HepG2 (cell line): ENCODE measurements at regions of chr3 and their contacts with region 1.

Region 1: DNA sequence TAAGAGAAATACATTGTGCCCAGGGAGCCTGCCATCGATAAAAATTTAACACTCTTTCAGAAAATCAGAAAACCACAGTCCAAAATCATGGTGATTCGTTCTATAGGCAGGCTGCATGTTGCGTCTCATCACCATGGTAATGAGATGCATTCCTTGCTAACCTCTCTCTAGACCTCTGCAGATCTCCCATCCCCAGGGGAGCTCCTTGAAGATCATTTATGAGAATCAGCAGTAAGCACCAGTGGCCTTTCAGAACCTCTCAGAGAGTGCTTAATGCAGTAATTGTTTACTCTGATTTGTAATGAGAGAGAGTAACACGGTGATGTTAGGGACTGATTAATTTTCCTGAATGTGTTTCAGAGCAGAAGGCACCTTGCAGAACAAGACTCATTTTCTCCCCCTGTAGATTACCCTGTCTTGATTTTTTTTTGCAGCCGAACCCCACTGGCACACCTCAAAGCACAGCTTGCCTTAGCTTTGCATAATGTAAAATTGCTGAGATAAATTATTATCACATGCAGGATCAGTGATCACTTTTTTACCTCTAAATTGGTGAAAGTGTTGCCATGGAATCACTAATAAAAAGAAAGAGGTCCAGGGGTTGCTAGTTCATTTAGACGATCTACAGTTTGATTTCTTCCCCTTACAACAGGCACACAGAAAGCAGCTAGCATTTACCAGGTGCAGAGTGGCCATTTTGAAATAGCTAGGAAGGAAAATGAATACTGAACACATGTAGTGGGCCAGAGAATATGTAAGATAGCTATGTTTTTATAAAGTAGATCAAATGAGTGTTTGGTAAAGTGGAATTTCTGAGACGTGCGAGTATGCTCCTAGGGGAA is 98.9 kb upstream of the CHL1 start:
- DNase-seq: no peak
- ATAC-seq: no peak
- H3K4me3 ChIP-seq: no peak overlapping the region
- H3K27ac ChIP-seq: no peak overlapping the region
- H3K4me1 ChIP-seq: peaks cover 7% of the 10 kb centered on the region
- H3K27me3 ChIP-seq: no peaks in the 10 kb centered on the region
- CTCF ChIP-seq: no peak
- EP300 ChIP-seq: no peak
- POLR2A ChIP-seq: no peak
- RAD21 ChIP-seq: no peak

Region 2: GRCh38 chr3:124557-125179 is 27.0 kb after region 1 on chr3:
- CTCF ChIA-PET with region 1: no interaction called
- POLR2A ChIA-PET with region 1: no interaction called
- in situ Hi-C with region 1: no loop called
- intact Hi-C with region 1: loop called (anchors 1 kb)
- DNase-seq: no peak
- ATAC-seq: no peak
- H3K4me3 ChIP-seq: no peak overlapping the region
- H3K27ac ChIP-seq: no peak overlapping the region
- H3K4me1 ChIP-seq: no peaks in the 10 kb centered on the region
- H3K27me3 ChIP-seq: no peaks in the 10 kb centered on the region
- CTCF ChIP-seq: no peak
- EP300 ChIP-seq: no peak
- POLR2A ChIP-seq: no peak
- RAD21 ChIP-seq: no peak